MCF 10A (cell line): ENCODE measurements at regions of chr1 and their contacts with region 1.

Region 1: DNA sequence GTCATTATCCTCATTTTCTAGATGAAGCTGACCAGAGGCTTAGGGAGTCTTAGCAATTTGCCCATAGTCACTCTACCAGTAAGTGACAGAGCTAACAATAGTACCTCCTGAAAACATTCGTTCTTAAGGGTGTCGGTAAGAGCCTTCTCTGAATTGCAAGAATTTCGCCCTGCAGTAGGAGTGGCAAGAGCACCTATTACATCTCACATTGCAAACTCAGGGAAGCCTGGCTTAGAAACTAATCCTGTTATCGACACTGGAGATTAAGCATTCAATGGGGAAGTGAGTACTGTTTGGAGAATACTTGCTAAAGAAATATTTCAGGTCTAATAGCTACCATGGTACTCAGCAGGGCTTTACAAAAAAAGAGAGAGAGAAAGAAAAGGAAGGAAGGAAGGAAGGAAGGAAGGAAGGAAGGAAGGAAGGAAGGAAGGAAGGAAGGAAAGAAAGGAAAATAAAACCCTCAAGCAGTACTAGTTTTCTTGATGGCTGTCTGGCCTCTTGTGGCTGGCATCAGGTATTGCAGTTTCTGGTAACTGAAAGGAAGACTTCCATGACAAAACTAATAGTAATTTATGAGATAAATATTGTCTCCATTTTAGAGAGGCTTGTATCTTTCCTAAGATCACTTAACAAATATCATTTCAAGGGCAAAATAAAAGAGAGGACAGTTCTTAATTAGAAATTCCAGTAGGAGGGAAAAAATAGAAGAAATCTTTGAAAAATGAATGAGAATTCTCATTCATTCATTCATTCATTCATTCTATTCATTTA is 10.4 kb downstream of the C1orf226 start:
- DNase-seq: peak; percentile 72
- H3K4me3 Mint-ChIP-seq: no peak overlapping the region
- H3K27ac Mint-ChIP-seq: no peak overlapping the region
- H3K4me1 Mint-ChIP-seq: peaks cover 37% of the 10 kb centered on the region
- H3K27me3 Mint-ChIP-seq: peaks cover 13% of the 10 kb centered on the region
- CTCF ChIP-seq: peak; percentile 93

Region 2: GRCh38 chr1:161792740-161793139 is 599.2 kb before region 1 on chr1:
- CTCF ChIA-PET with region 1: interaction called, 9 read pairs
- POLR2A ChIA-PET with region 1: no interaction called
- intact Hi-C with region 1: loop called (anchors 10 kb)
- DNase-seq: peak; percentile 87
- H3K4me3 Mint-ChIP-seq: no peak overlapping the region
- H3K27ac Mint-ChIP-seq: no peak overlapping the region
- H3K4me1 Mint-ChIP-seq: peaks cover 18% of the 10 kb centered on the region
- H3K27me3 Mint-ChIP-seq: no peaks in the 10 kb centered on the region
- CTCF ChIP-seq: peak; percentile 71

Region 3: GRCh38 chr1:162240568-162240967 is 151.4 kb before region 1 on chr1:
- CTCF ChIA-PET with region 1: interaction called, 8 read pairs
- POLR2A ChIA-PET with region 1: interaction called, 3 read pairs
- intact Hi-C with region 1: loop called (anchors 1 kb)
- DNase-seq: no peak
- H3K4me3 Mint-ChIP-seq: no peak overlapping the region
- H3K27ac Mint-ChIP-seq: no peak overlapping the region
- H3K4me1 Mint-ChIP-seq: no peaks in the 10 kb centered on the region
- H3K27me3 Mint-ChIP-seq: no peaks in the 10 kb centered on the region
- CTCF ChIP-seq: no peak

Region 4: DNA sequence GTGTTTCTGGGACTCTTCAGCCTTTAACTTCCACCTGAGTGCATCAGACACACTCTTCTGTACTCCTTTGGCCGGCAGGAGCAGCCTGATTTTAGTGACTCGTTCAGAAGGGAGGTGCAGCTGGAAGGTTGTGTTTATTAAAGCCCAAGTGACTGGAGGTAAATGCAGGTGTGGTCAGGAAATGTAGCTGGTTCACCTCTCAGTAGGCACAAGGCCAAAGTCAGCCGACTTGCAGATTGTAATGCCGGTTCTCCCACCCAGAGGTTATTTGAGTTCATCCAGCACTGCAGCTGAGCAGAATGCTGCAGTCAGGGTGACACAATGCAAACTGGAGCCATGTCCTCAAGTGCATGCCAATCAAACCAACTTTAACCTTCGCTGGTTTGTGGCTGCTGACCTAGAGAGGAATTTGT is 106.8 kb before region 1 on chr1:
- CTCF ChIA-PET with region 1: interaction called, 93 read pairs
- POLR2A ChIA-PET with region 1: interaction called, 4 read pairs
- intact Hi-C with region 1: loop called (anchors 2 kb)
- DNase-seq: peak; percentile 63
- H3K4me3 Mint-ChIP-seq: no peak overlapping the region
- H3K27ac Mint-ChIP-seq: no peak overlapping the region
- H3K4me1 Mint-ChIP-seq: peaks cover 21% of the 10 kb centered on the region
- H3K27me3 Mint-ChIP-seq: no peaks in the 10 kb centered on the region
- CTCF ChIP-seq: no peak

Region 5: GRCh38 chr1:162319493-162320175 is 72.3 kb before region 1 on chr1:
- CTCF ChIA-PET with region 1: interaction called, 11 read pairs
- POLR2A ChIA-PET with region 1: no interaction called
- intact Hi-C with region 1: no loop called
- DNase-seq: peak; percentile 69
- H3K4me3 Mint-ChIP-seq: no peak overlapping the region
- H3K27ac Mint-ChIP-seq: peak overlapping the region; percentile 46
- H3K4me1 Mint-ChIP-seq: peaks cover 12% of the 10 kb centered on the region
- H3K27me3 Mint-ChIP-seq: no peaks in the 10 kb centered on the region
- CTCF ChIP-seq: no peak

Region 6: GRCh38 chr1:162373541-162374375 is 18.2 kb before region 1 on chr1:
- CTCF ChIA-PET with region 1: interaction called, 45 read pairs
- POLR2A ChIA-PET with region 1: interaction called, 23 read pairs
- intact Hi-C with region 1: no loop called
- DNase-seq: peak; percentile 91
- H3K4me3 Mint-ChIP-seq: peak overlapping the region; percentile 6
- H3K27ac Mint-ChIP-seq: peak overlapping the region; percentile 92
- H3K4me1 Mint-ChIP-seq: peaks cover 33% of the 10 kb centered on the region
- H3K27me3 Mint-ChIP-seq: no peaks in the 10 kb centered on the region
- CTCF ChIP-seq: no peak

Region 7: GRCh38 chr1:162710345-162710744 is 318.4 kb after region 1 on chr1:
- CTCF ChIA-PET with region 1: no interaction called
- POLR2A ChIA-PET with region 1: no interaction called
- intact Hi-C with region 1: no loop called
- DNase-seq: no peak
- H3K4me3 Mint-ChIP-seq: no peak overlapping the region
- H3K27ac Mint-ChIP-seq: no peak overlapping the region
- H3K4me1 Mint-ChIP-seq: no peaks in the 10 kb centered on the region
- H3K27me3 Mint-ChIP-seq: no peaks in the 10 kb centered on the region
- CTCF ChIP-seq: no peak